Colonic mucosa (tissue), 4 donors: ENCODE measurements at regions of chr9 and their contacts with region 1.

Region 1: GRCh38 chr9:134099123-134099787 is 31.4 kb upstream of the BRD3 start:
- DNase-seq: peak; percentile 54
- H3K4me3 ChIP-seq: no peak overlapping the region
- H3K27ac ChIP-seq: no peak overlapping the region
- H3K4me1 ChIP-seq: no peaks in the 10 kb centered on the region
- H3K27me3 ChIP-seq: no peaks in the 10 kb centered on the region
- CTCF ChIP-seq: peak; percentile 74

Region 2: DNA sequence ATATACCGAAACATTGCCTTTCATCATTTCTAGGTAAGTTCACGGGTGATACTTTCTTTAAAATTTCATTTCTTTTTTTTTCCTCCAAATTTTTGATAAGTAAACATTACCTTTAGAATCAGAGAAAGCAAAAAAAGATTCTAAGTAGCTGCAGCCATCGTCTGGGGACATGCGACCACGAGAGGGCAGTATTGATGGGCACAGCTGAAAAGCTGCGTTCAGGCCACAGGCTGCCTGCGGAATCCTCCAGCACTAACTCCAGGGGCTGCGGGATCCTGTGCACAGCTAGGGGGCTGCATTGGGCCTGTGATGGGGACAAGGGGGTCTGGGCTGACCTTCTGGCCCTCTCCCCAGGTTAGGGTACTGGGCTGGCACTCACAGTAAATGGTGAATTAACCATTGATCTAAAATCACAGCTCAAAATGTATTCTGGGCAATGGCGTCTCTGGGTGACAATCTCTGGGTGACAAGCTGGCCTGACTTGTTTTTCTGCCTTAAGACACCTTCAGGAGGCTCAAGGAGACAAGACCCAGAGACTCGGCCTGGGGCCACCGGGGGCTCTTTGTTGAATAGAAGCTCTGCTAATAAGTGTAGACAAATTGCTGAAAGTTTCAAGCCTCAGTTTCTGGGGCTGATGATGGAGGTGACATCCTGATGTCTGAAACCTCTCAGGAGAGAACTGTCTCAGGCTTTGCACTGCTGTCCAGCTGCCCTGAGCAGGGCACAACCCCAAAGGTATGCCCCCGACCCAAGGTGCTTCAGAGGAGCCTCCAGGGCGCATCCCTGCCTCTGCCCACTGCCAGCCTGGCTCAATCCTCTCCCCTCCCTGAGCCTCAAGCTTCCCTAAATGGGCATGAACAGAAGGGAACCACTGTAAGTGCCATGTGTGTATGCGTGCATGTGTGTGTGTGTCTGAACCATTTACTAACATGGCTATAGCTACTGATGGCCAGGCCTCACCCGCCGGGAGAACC is 316.8 kb before region 1 on chr9:
- intact Hi-C with region 1: loop called (anchors 5 kb)
- DNase-seq: peak; percentile 75
- H3K4me3 ChIP-seq: no peak overlapping the region
- H3K27ac ChIP-seq: no peak overlapping the region
- H3K4me1 ChIP-seq: no peaks in the 10 kb centered on the region
- H3K27me3 ChIP-seq: no peaks in the 10 kb centered on the region
- CTCF ChIP-seq: peak; percentile 68